GM12878 (cell line): ENCODE measurements at regions of chr11 and their contacts with region 1.

Region 1: GRCh38 chr11:83819933-83820549 is 533.9 kb upstream of the CCDC90B start:
- DNase-seq: no peak
- ATAC-seq: peak; percentile 79
- H3K4me3 ChIP-seq: no peak overlapping the region
- H3K27ac ChIP-seq: no peak overlapping the region
- H3K4me1 ChIP-seq: no peaks in the 10 kb centered on the region
- H3K27me3 ChIP-seq: no peaks in the 10 kb centered on the region
- CTCF ChIP-seq: peak; percentile 20 to 62 (median 29); a peak in 4 of 6 replicates
- EP300 ChIP-seq: no peak
- POLR2A ChIP-seq: no peak
- RAD21 ChIP-seq: peak; percentile 79

Region 2: DNA sequence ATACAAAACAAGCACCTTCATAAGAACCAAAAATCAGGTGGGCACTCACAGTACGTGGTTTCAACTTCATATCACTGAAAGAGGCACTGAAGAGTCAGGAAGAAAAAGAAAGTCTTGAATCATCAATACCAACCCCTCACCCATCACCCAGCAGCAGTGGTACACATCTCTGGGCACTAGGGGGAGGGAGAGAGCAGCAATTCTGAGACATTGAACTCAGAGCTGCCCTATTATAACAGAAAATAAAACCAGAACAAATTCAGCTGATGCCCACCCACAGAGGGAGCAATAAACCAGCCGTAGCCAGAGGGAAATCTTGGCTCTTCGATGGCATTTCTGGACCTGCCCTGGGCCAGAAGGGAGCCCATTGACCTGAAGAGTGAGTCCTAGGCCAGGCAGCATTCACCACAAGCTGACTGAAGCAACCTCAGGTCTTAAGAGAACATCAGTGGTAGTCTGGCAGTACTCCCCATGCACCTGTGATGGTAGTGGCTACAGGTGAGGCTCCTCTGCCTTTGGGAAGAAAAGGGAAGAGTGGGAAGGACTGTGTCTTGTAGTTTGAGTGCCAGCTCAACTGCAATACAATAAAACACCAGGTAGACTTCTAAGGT is 1044.2 kb before region 1 on chr11:
- CTCF ChIA-PET with region 1: interaction called, 8 read pairs
- POLR2A ChIA-PET with region 1: no interaction called
- RAD21 ChIA-PET with region 1: interaction called, 5 read pairs
- SMC1A ChIA-PET with region 1: interaction called, 5 read pairs
- in situ Hi-C with region 1: no loop called
- intact Hi-C with region 1: loop called (anchors 2 kb)
- DNase-seq: no peak
- ATAC-seq: peak; percentile 100
- H3K4me3 ChIP-seq: no peak overlapping the region
- H3K27ac ChIP-seq: no peak overlapping the region
- H3K4me1 ChIP-seq: no peaks in the 10 kb centered on the region
- H3K27me3 ChIP-seq: no peaks in the 10 kb centered on the region
- CTCF ChIP-seq: peak; percentile 76 to 90 (median 85)
- EP300 ChIP-seq: no peak
- POLR2A ChIP-seq: no peak
- RAD21 ChIP-seq: peak; percentile 64

Region 3: GRCh38 chr11:82906244-82906654 is 913.8 kb before region 1 on chr11:
- CTCF ChIA-PET with region 1: interaction called, 5 read pairs
- POLR2A ChIA-PET with region 1: no interaction called
- RAD21 ChIA-PET with region 1: interaction called, 4 read pairs
- SMC1A ChIA-PET with region 1: no interaction called
- in situ Hi-C with region 1: no loop called
- intact Hi-C with region 1: loop called (anchors 5 kb)
- DNase-seq: no peak
- ATAC-seq: no peak
- H3K4me3 ChIP-seq: no peak overlapping the region
- H3K27ac ChIP-seq: peak overlapping the region; percentile 49; the same call in 1 of the 2 replicates
- H3K4me1 ChIP-seq: peaks cover 15% of the 10 kb centered on the region; the same call in 1 of the 2 replicates
- H3K27me3 ChIP-seq: no peaks in the 10 kb centered on the region
- CTCF ChIP-seq: peak in 1 of 3 experiments; percentile 32; a peak in 2 of 6 replicates
- EP300 ChIP-seq: no peak
- POLR2A ChIP-seq: no peak
- RAD21 ChIP-seq: peak; percentile 66

Region 4: GRCh38 chr11:83235825-83236224 is 584.2 kb before region 1 on chr11:
- CTCF ChIA-PET with region 1: interaction called, 3 read pairs
- POLR2A ChIA-PET with region 1: no interaction called
- RAD21 ChIA-PET with region 1: no interaction called
- SMC1A ChIA-PET with region 1: interaction called, 6 read pairs
- in situ Hi-C with region 1: loop called (anchors 10 kb)
- intact Hi-C with region 1: loop called (anchors 5 kb)
- DNase-seq: no peak
- ATAC-seq: no peak
- H3K4me3 ChIP-seq: no peak overlapping the region
- H3K27ac ChIP-seq: no peak overlapping the region
- H3K4me1 ChIP-seq: no peaks in the 10 kb centered on the region
- H3K27me3 ChIP-seq: no peaks in the 10 kb centered on the region
- CTCF ChIP-seq: no peak
- EP300 ChIP-seq: no peak
- POLR2A ChIP-seq: no peak
- RAD21 ChIP-seq: no peak

Region 5: DNA sequence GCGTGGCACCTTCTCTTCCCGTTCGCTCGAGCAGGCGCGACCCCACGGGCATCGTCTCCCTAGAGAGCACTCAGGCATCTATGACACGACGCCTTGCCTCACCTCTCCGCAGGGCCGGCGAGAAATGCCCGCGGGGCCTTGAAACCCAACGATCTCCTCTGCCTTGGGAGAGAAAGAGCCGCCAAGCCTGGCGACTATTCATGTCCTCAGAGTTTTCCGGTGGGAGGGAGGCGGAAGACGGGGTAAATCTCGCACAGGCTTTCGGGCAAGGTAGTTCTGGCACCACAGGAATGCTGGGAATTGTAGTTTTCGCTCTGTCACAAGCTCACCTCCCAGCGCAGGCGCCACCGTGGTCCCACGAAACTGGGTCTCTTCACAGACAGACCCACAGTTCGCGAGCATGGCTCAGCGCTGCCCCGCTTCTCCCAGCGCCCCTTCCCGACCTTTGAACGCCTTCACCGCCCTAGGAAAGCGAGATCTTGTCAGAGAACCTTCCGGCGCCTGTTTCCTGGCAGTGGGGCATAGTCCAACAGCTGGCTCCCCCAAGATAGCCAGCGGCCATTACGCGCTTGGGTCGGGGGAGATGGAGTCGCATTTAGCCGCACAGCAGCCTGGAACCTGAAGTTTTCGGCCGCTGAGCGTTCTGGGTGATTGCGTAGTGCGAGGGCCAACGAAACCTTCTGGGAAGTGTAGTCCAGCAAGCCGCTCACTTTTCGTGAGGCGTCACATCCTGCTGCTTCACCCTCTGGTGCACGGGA is 534.1 kb before region 1 on chr11 and contains the start of gene CCDC90B:
- CTCF ChIA-PET with region 1: interaction called, 56 read pairs
- POLR2A ChIA-PET with region 1: no interaction called
- RAD21 ChIA-PET with region 1: no interaction called
- SMC1A ChIA-PET with region 1: interaction called, 3 read pairs
- in situ Hi-C with region 1: loop called (anchors 5 kb)
- intact Hi-C with region 1: no loop called
- DNase-seq: peak; percentile 96
- ATAC-seq: peak; percentile 93
- H3K4me3 ChIP-seq: peak within 1 kb of the TSS; percentile 78
- H3K27ac ChIP-seq: peak within 1 kb of the TSS; percentile 96
- H3K4me1 ChIP-seq: peaks cover 21% of the 10 kb centered on the region
- H3K27me3 ChIP-seq: no peaks in the 10 kb centered on the region
- CTCF ChIP-seq: peak in 2 of 3 experiments; percentile 30 to 75; a peak in 3 of 6 replicates
- EP300 ChIP-seq: 0 out of 4 replicates have a peak, but pooled peaks of 1 of the 2 experiments have one; percentile 42
- POLR2A ChIP-seq: peak; percentile 96
- RAD21 ChIP-seq: no peak
- polyA plus RNA-seq, gene CCDC90B: 76.2 to 82.8 TPM

Region 6: GRCh38 chr11:83521647-83522596 is 298.1 kb before region 1 on chr11:
- CTCF ChIA-PET with region 1: no interaction called
- POLR2A ChIA-PET with region 1: no interaction called
- RAD21 ChIA-PET with region 1: no interaction called
- SMC1A ChIA-PET with region 1: no interaction called
- in situ Hi-C with region 1: no loop called
- intact Hi-C with region 1: loop called (anchors 5 kb)
- DNase-seq: no peak
- ATAC-seq: no peak
- H3K4me3 ChIP-seq: no peak overlapping the region
- H3K27ac ChIP-seq: no peak overlapping the region
- H3K4me1 ChIP-seq: no peaks in the 10 kb centered on the region
- H3K27me3 ChIP-seq: no peaks in the 10 kb centered on the region
- CTCF ChIP-seq: peak; percentile 15 to 41 (median 19); a peak in 4 of 6 replicates
- EP300 ChIP-seq: no peak
- POLR2A ChIP-seq: no peak
- RAD21 ChIP-seq: peak; percentile 57

Region 7: DNA sequence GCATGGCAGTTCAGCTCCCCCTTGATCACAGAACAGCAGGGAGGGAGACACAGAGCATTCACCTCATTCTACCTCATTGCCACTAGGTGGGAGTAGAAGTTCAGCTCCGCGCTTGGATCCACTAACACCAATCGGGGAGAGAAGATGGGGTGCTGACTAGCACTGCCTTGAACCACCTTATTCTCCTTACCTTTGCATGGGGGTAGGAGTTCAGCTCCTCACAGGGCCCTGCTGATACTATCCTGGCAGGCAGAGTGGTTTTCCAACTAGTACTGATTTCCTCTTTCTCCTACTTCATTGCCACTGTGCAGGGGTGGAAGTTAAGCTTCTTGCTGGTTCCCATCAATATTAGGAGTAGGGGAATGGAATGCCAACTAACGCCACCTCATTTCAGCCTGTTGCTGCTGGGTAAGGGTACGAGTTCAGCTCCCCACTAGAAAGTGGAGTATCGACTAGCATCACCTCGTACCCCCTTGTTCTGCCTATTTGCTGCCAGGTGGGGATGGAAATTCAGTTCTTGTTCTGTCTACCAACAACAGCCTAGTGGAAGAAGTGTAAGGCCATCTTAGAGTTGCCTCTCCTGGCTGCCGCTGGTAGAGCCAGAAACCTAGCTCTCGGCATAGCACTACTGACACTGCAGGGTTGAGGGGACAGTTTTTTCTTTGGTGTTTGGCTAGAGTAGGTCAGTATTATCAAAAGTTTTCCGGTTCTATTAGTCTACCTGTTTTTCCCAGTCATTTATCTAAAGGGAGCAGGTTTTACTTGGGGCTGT is 17.0 kb after region 1 on chr11:
- CTCF ChIA-PET with region 1: interaction called, 15 read pairs
- POLR2A ChIA-PET with region 1: no interaction called
- RAD21 ChIA-PET with region 1: no interaction called
- SMC1A ChIA-PET with region 1: interaction called, 7 read pairs
- in situ Hi-C with region 1: no loop called
- intact Hi-C with region 1: no loop called
- DNase-seq: peak; percentile 5
- ATAC-seq: peak; percentile 97
- H3K4me3 ChIP-seq: no peak overlapping the region
- H3K27ac ChIP-seq: no peak overlapping the region
- H3K4me1 ChIP-seq: peaks cover 4% of the 10 kb centered on the region
- H3K27me3 ChIP-seq: peaks cover 0 to 5% of the 10 kb centered on the region in 2 experiments; a peak in 1 of 4 replicates
- CTCF ChIP-seq: peak; percentile 77 to 80 (median 79); a peak in 5 of 6 replicates
- EP300 ChIP-seq: no peak
- POLR2A ChIP-seq: no peak
- RAD21 ChIP-seq: peak; percentile 86